ENCODE measurements at regions of chr3 and their contacts with region 1.

Region 1: DNA sequence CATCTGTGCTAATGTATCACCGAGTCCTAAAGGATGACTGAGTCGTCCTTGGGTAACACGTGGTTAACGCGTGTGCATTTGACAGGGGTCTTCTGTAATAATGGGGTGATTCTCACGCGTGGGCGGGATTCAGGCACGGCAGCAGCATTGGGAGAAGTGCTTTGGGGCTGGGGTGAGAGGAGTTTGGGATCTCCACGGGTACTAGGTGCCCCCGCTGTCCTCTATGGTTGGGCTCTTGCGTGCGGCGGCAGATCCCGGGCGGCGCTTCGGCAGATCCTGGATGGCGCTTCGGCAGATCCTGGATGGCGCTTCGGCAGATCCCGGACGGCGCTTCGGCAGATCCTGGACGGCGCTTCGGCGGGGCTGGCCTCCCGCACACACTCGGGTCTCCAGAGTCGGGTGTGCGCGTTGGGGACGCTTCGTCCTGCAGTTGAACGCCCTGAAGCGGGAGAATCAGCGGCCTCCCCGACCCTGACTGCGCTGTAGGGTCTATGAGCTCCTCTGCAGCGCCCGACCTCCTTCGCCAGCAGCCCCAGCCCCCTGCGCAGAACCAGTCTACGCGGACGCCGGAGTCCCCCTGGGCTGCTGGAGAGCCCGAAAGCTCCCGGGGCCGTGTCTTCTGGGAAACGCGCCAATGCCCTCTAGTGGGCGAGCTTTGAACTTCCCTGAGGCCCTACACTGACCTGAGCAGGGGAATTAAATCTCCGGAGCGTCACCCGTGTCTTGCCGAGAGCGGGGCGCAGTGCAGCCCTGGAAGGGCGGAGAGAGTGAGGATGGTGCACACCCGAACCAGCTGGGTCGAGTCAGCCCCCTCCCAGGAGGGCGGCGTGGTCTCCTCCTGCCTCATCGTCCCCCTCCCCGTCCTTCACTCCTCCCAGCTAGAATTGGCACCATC is 48.1 kb upstream of the EPHB3 start:
- DNase-seq: peak; percentile 74
- H3K4me3 Mint-ChIP-seq: peak overlapping the region; percentile 53
- H3K27ac Mint-ChIP-seq: no peak overlapping the region
- H3K4me1 Mint-ChIP-seq: no peaks in the 10 kb centered on the region
- H3K27me3 Mint-ChIP-seq: peaks cover 69% of the 10 kb centered on the region
- CTCF ChIP-seq: peak; percentile 80

Region 2: GRCh38 chr3:183108001-183108449 is 1405.5 kb before region 1 on chr3:
- CTCF ChIA-PET with region 1: no interaction called
- POLR2A ChIA-PET with region 1: no interaction called
- intact Hi-C with region 1: no loop called
- DNase-seq: no peak
- H3K4me3 Mint-ChIP-seq: no peak overlapping the region
- H3K27ac Mint-ChIP-seq: no peak overlapping the region
- H3K4me1 Mint-ChIP-seq: peaks cover 6% of the 10 kb centered on the region
- H3K27me3 Mint-ChIP-seq: no peaks in the 10 kb centered on the region
- CTCF ChIP-seq: no peak

Region 3: GRCh38 chr3:184371570-184372018 is 141.9 kb before region 1 on chr3:
- CTCF ChIA-PET with region 1: interaction called, 72 read pairs
- POLR2A ChIA-PET with region 1: no interaction called
- intact Hi-C with region 1: loop called (anchors 2 kb)
- DNase-seq: peak; percentile 86
- H3K4me3 Mint-ChIP-seq: no peak overlapping the region
- H3K27ac Mint-ChIP-seq: no peak overlapping the region
- H3K4me1 Mint-ChIP-seq: peaks cover 11% of the 10 kb centered on the region
- H3K27me3 Mint-ChIP-seq: peaks cover 23% of the 10 kb centered on the region
- CTCF ChIP-seq: peak; percentile 94

Region 4: DNA sequence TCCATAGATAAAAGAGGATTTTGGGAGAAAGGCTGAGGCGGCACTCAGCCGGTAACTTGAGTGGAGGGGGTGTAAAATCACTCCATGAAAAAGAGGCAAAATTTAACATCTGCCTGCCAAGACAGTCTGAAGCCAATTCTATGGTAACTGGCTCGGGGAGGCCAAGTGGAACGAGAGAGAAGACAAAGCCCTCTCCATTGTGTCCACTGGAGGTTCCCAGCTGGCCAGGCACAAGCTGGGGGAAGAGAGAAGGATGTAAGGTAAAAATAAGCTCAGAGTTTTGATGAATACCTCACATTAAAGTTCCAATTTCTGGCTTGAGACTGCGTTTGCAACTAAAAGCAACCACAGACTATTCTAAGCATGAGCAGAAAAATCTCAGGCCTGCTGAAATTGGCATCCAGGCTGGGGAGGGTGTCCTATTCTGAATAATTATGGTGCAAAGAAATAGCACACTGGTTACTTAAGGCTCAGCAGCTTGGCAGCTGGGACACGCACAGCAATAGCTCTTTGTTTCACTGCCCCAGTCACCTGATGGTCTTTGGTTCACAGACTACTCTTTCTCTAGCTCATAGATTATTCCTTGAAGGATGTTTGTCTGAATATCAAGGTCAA is 84.9 kb before region 1 on chr3:
- CTCF ChIA-PET with region 1: interaction called, 13 read pairs
- POLR2A ChIA-PET with region 1: interaction called, 3 read pairs
- intact Hi-C with region 1: no loop called
- DNase-seq: no peak
- H3K4me3 Mint-ChIP-seq: no peak overlapping the region
- H3K27ac Mint-ChIP-seq: no peak overlapping the region
- H3K4me1 Mint-ChIP-seq: peaks cover 10% of the 10 kb centered on the region
- H3K27me3 Mint-ChIP-seq: peaks cover 5% of the 10 kb centered on the region
- CTCF ChIP-seq: no peak

Region 5: GRCh38 chr3:184474897-184475296 is 38.6 kb before region 1 on chr3:
- CTCF ChIA-PET with region 1: interaction called, 107 read pairs
- POLR2A ChIA-PET with region 1: interaction called, 4 read pairs
- intact Hi-C with region 1: no loop called
- DNase-seq: no peak
- H3K4me3 Mint-ChIP-seq: no peak overlapping the region
- H3K27ac Mint-ChIP-seq: no peak overlapping the region
- H3K4me1 Mint-ChIP-seq: no peaks in the 10 kb centered on the region
- H3K27me3 Mint-ChIP-seq: peaks cover 90% of the 10 kb centered on the region
- CTCF ChIP-seq: no peak

Region 6: DNA sequence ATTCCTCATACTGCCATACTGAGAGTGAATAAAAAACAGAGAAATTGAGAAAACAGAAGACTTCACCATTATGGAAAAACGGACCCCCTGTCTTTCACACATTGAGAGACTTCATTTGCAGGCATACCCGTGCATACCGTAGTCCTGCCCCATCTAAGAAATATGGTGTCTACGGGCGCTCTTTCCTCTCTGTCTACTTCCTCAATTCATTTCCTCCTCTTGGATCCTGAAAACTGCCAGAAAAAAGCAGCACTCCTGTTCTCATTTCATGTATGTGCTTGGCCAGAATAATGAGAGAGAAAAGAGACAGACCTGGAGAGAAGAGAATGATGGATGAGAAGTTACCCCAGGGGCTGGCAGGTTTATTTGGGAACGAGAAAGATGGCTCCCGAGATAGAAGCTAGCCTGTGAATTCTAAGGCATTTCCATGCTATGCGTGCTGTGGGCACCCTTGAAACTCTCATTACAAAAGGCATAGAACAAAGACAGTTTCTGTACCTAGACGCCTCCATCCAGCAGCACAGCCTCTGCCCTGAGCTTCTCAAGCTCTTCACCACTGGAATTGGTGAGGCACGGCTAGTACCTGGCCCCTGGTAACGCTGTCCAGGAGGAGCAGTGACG is 14.4 kb before region 1 on chr3:
- CTCF ChIA-PET with region 1: interaction called, 12 read pairs
- POLR2A ChIA-PET with region 1: interaction called, 3 read pairs
- intact Hi-C with region 1: no loop called
- DNase-seq: no peak
- H3K4me3 Mint-ChIP-seq: no peak overlapping the region
- H3K27ac Mint-ChIP-seq: no peak overlapping the region
- H3K4me1 Mint-ChIP-seq: peaks cover 17% of the 10 kb centered on the region
- H3K27me3 Mint-ChIP-seq: peaks cover 6% of the 10 kb centered on the region
- CTCF ChIP-seq: no peak

Region 7: DNA sequence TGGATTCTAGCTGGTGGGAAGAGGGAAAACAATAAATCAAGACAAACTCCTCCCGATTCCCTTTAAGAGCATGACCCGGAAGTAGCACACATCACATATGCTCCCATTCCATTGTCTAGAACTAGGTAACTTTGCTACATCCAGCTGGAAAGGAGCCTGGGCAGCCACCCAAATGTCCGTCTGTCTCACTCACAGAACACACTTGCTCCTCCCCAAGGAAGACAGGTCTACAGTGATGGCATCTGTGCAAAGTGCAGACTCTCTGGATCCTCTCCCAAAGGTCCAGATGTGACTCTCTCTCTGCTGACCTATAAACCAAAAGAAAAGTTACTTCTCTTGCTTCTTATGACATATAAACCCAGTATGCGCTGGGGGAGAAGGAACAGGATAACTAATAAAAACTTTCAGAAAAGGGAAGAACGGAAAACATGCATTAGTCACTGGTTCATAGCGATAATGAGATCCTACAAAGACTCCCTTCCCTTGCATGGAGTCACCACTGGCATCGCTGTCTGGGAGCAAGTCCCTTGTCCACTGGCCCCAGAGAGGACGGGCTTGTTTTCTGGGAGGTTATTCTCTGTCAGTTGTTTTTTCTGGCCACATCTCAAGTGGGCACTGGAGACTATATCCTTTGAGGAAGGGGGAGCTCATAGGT is 18.2 kb after region 1 on chr3:
- CTCF ChIA-PET with region 1: interaction called, 10 read pairs
- POLR2A ChIA-PET with region 1: no interaction called
- intact Hi-C with region 1: no loop called
- DNase-seq: no peak
- H3K4me3 Mint-ChIP-seq: no peak overlapping the region
- H3K27ac Mint-ChIP-seq: no peak overlapping the region
- H3K4me1 Mint-ChIP-seq: no peaks in the 10 kb centered on the region
- H3K27me3 Mint-ChIP-seq: peaks cover 58% of the 10 kb centered on the region
- CTCF ChIP-seq: no peak

Region 8: GRCh38 chr3:184543843-184544512 is 30.5 kb after region 1 on chr3:
- CTCF ChIA-PET with region 1: interaction called, 42 read pairs
- POLR2A ChIA-PET with region 1: no interaction called
- intact Hi-C with region 1: no loop called
- DNase-seq: peak; percentile 82
- H3K4me3 Mint-ChIP-seq: no peak overlapping the region
- H3K27ac Mint-ChIP-seq: no peak overlapping the region
- H3K4me1 Mint-ChIP-seq: no peaks in the 10 kb centered on the region
- H3K27me3 Mint-ChIP-seq: peaks cover 70% of the 10 kb centered on the region
- CTCF ChIP-seq: peak; percentile 91